Activated T-helper 1 cell treated with anti-CD3 and anti-CD28 coated beads, Interleukin-12 subunit alpha, Interleukin-12 subunit beta, Interleukin-2, Interleukin-4 antibody, amounts not matched to agents 30 ng/mL and 10 ng/mL and 1 ng/mL, durations not matched to agents 14 hours and 24 hours and 36 hours (primary cell): ENCODE measurements at regions of chr1 and their contacts with region 1.

Region 1: GRCh38 chr1:46527474-46528296 is 23.8 kb downstream of the KNCN start:
- DNase-seq: peak; percentile 64
- H3K4me3 Mint-ChIP-seq: no peak overlapping the region
- H3K27ac Mint-ChIP-seq: peak overlapping the region; percentile 18
- H3K4me1 Mint-ChIP-seq: peaks cover 23% of the 10 kb centered on the region
- H3K27me3 Mint-ChIP-seq: peaks cover 16% of the 10 kb centered on the region

Region 2: DNA sequence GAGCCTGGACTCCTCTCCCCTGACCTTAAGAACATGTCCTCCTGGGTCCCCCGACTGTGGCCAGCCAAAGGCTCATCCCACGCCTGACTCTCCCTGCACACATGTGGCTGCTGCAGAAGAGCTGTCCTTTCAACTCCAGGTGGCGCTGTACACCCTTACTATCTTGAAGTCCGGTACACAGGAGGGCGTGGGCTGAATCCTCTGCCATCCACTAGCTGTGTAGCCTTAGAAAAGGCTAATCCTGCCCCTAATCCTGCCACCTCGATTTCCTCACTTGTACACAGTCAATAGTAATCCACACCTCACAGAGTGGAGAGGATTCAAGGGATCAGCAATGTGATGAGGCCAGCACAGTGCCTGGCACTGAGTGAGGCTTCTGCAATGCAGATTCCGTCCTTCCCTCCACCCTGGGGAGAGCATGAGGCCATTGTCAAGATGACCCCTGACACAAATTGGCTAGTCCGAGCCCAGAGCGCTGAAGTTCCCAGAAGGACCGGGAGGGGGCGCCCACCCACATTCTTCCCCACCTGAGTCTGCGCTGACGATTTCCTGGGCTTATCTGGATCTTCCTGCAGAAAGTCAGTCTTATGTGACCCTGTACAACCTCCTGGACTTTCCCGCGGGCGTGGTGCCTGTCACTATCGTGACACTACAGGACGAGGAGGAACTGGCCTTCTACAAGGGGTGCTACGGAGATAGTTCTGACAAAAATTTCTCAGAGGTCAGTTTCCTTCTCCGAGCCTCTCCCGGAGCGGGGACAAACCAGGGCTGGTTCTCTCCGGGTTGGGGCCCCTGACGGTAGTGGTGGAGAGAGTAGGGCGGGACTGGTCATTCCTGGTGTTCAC is 85.1 kb before region 1 on chr1:
- intact Hi-C with region 1: loop called (anchors 1 kb)
- DNase-seq: peak; percentile 56
- H3K4me3 Mint-ChIP-seq: peak overlapping the region; percentile 81
- H3K27ac Mint-ChIP-seq: peak overlapping the region; percentile 64
- H3K4me1 Mint-ChIP-seq: peaks cover 13% of the 10 kb centered on the region
- H3K27me3 Mint-ChIP-seq: peaks cover 38% of the 10 kb centered on the region

Region 3: GRCh38 chr1:46489638-46490405 is 37.9 kb before region 1 on chr1 and contains the start of gene DMBX1:
- intact Hi-C with region 1: loop called (anchors 1 kb)
- DNase-seq: peak; percentile 26
- H3K4me3 Mint-ChIP-seq: peak within 1 kb of the TSS; percentile 80
- H3K27ac Mint-ChIP-seq: peak within 1 kb of the TSS; percentile 76
- H3K4me1 Mint-ChIP-seq: peaks cover 28% of the 10 kb centered on the region
- H3K27me3 Mint-ChIP-seq: peaks cover 89% of the 10 kb centered on the region
- total RNA-seq, gene DMBX1: not detected in 2 replicates

Region 4: DNA sequence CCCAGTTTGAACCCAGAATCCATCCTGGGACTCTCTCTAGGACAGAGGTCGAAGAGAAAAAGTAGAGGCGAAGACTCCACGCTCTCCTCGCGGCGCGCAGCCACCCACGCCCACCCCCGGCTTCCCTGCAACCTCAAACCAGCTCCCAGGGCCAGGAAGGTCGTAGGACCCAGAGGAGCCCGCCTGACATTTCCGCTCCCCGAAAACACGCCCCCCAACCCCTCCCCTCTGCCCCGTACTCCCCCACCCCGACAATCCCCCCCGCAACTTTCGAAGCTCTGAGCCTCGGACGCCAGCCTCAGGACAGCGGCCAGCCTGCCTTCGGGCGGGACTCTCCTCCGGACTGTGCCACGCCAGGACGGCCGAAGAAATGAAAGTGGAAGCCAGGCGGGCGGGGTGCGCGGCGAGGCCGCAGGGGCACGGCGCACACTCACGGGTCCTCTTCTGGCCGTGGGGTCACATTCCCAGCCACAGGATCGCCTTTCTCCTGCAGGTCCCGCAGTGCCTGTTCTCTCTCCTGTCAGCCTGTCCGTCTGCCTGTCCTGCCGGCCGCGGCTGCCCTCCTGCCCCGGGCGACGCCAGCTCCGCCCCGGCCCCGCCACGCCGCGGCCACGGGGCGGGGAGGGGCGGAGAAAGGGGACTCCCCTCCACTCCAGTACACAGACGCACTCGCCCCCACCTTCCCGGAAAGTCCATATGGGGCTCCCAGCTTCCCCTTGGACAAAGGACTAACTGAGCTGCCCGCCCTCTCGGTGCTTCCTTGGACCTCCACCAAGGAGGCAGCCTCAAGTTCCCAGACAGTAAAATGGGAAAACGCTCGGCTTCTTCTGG is 88.8 kb after region 1 on chr1 and contains the start of gene MOB3C:
- intact Hi-C with region 1: loop called (anchors 2 kb)
- DNase-seq: peak; percentile 51
- H3K4me3 Mint-ChIP-seq: peak within 1 kb of the TSS; percentile 90
- H3K27ac Mint-ChIP-seq: peak within 1 kb of the TSS; percentile 87
- H3K4me1 Mint-ChIP-seq: peaks cover 51% of the 10 kb centered on the region
- H3K27me3 Mint-ChIP-seq: peaks cover 2% of the 10 kb centered on the region
- total RNA-seq, gene MOB3C: 16.9 and 17.0 TPM in 2 replicates

Region 5: DNA sequence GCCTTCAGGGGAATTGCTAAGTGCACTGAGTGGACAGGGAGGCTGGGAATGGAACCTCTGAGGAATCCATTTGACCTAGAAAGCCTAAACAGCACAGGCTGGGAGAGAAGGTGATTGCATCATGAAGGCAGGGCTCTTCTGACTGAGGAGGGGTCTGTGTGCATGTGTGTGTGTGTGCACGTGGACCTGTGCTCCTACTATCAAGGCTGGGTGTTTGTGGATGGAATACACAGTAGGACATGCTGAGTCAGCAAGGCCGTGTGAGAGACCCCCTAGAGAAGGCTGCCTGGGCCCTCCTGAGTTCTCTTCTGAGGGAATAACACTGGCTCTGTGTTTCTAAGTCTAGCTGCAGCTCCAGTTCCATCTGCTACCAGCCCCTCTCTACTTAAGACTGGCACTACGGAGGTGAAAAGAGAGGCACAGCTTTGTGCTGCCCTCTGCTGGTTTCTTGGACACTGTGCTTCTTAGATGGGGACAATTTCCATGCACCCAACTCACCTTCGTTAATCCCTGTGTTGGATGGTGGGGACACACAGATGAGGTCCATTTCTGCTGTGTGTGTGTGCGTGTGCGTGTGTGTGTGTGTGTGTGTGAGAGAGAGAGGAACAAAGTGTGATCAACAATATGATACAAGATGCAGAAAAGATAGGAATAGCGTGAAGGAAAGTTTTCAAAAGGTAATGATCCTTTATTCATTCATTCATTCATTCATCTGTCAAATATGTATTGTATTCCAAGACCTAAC is 197.5 kb after region 1 on chr1:
- intact Hi-C with region 1: loop called (anchors 1 kb)
- DNase-seq: peak; percentile 56
- H3K4me3 Mint-ChIP-seq: no peak overlapping the region
- H3K27ac Mint-ChIP-seq: no peak overlapping the region
- H3K4me1 Mint-ChIP-seq: no peaks in the 10 kb centered on the region
- H3K27me3 Mint-ChIP-seq: peaks cover 16% of the 10 kb centered on the region

Region 6: GRCh38 chr1:47637111-47637685 is 1109.5 kb after region 1 on chr1:
- intact Hi-C with region 1: no loop called
- DNase-seq: no peak
- H3K4me3 Mint-ChIP-seq: no peak overlapping the region
- H3K27ac Mint-ChIP-seq: no peak overlapping the region
- H3K4me1 Mint-ChIP-seq: no peaks in the 10 kb centered on the region
- H3K27me3 Mint-ChIP-seq: peaks cover 5% of the 10 kb centered on the region